ENCODE measurements at regions of chr11 and their contacts with region 1.

Region 1: DNA sequence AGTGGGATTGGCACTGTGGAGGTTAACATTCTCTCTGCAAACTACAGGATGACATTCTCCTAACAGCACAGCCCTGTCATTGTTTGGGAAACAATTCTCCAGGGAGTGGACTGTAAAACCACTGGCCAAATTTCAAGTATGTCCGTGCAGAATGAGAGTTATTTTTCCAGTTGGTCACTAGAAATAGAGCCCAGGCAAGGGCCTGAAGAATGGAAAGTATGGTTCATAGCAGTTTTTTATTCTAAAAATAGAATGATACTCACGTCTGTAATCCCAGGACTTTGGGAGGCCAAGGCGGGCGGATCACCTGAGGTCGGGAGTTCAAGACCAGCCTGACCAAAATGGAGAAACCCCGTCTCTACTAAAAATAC is 39.0 kb upstream of the CD44 start:
- DNase-seq: peak in 1 of 2 donors; percentile 80
- H3K4me3 ChIP-seq: no peak overlapping the region
- H3K27ac ChIP-seq: peak overlapping the region; percentile 75 to 83
- H3K4me1 ChIP-seq: peaks cover 0 to 27% of the 10 kb centered on the region in 2 donors
- H3K27me3 ChIP-seq: no peaks in the 10 kb centered on the region
- CTCF ChIP-seq: no peak

Region 2: GRCh38 chr11:34840736-34841386 is 259.1 kb before region 1 on chr11:
- intact Hi-C with region 1: no loop called
- DNase-seq: no peak
- H3K4me3 ChIP-seq: no peak overlapping the region
- H3K27ac ChIP-seq: no peak overlapping the region
- H3K4me1 ChIP-seq: no peaks in the 10 kb centered on the region
- H3K27me3 ChIP-seq: no peaks in the 10 kb centered on the region
- CTCF ChIP-seq: peak in 1 of 3 experiments; percentile 33

Region 3: DNA sequence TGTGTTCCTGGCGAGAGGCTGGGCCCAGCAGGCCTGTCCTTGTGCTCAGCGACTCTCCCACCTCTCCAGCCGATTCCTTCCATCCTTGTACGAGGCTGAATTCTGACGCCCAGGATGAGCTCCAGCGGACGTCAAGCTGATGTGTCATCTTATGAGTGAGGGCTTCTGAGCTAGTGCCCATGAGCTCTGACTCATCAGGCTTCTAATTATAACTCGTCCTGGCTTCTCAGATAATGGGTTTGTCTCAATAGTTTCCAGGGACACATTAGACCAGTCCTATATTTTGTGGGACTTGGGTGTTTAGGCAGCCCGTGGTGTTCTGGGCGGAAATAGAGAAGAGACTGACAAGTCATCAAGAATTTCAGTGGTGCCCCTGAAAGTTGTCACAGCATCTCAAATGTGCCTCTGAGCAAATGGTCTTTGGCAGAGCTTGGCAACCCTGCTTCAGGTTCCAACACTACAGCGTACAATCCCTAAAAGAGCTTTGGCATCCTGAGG is 69.2 kb before region 1 on chr11:
- intact Hi-C with region 1: loop called (anchors 5 kb)
- DNase-seq: peak; percentile 60 to 85
- H3K4me3 ChIP-seq: no peak overlapping the region
- H3K27ac ChIP-seq: peak overlapping the region in 1 of 2 donors; percentile 19
- H3K4me1 ChIP-seq: peaks cover 0 to 4% of the 10 kb centered on the region in 2 donors
- H3K27me3 ChIP-seq: no peaks in the 10 kb centered on the region
- CTCF ChIP-seq: no peak

Region 4: GRCh38 chr11:35082321-35083182 is 17.4 kb before region 1 on chr11:
- intact Hi-C with region 1: loop called (anchors 2 kb)
- DNase-seq: peak; percentile 37 to 81
- H3K4me3 ChIP-seq: no peak overlapping the region
- H3K27ac ChIP-seq: peak overlapping the region; percentile 67 to 69
- H3K4me1 ChIP-seq: peaks cover 13 to 42% of the 10 kb centered on the region in 2 donors
- H3K27me3 ChIP-seq: no peaks in the 10 kb centered on the region
- CTCF ChIP-seq: no peak

Region 5: GRCh38 chr11:35138943-35139721 is 39.1 kb after region 1 on chr11 and contains the start of gene CD44:
- intact Hi-C with region 1: loop called (anchors 2 kb)
- DNase-seq: peak; percentile 74 to 93
- H3K4me3 ChIP-seq: peak within 1 kb of the TSS; percentile 70 to 83
- H3K27ac ChIP-seq: peak within 1 kb of the TSS; percentile 90 to 98
- H3K4me1 ChIP-seq: peaks cover 11 to 27% of the 10 kb centered on the region in 2 donors
- H3K27me3 ChIP-seq: no peaks in the 10 kb centered on the region
- CTCF ChIP-seq: peak in 1 of 3 experiments; percentile 9
- total RNA-seq, gene CD44: 188 TPM

Region 6: DNA sequence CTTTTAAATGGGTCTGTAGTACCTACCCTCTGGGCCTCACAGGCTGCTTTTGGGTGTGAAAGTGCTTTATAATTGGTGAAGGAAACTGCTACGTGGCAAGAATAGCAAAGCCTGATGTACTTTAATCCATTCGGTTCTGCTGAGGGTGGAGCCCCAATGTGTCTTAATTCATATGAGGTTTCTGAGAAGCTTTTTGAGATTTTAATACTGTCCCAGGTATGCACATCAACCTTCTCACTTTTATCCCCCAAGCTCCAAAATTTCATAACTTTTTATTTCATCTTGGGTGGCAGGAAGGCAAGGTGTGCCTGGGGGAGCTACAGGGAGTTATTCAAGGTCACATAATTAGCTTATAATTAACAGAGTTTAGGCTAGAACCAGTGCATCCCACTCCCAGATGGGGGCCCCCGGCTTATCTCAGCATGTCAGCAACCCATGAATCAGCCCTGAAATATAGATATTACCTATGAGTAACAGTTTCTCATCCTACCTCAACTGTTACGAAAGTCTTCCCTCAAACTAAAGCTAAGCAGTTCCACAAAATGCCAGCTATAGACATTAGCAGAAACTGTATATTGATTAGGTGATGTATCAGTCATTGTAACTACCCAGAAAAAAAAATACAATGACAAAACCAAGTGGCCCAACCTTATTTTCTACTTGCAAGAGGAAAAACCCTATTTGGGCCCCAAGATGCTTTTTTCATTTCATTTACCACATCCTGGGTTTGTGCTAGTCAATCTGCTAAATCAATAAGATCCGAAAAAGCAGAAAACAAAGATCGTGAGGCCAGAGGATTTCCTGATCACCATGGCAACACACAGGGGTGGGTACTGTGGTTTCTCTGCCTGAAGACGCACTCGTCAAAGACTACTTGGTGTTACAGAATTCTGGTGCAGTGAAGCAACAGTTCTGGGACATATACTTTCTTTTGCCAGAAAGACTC is 65.7 kb after region 1 on chr11:
- intact Hi-C with region 1: loop called (anchors 2 kb)
- DNase-seq: peak in 1 of 2 donors; percentile 84
- H3K4me3 ChIP-seq: no peak overlapping the region
- H3K27ac ChIP-seq: peak overlapping the region; percentile 87 to 89
- H3K4me1 ChIP-seq: peaks cover 23 to 87% of the 10 kb centered on the region in 2 donors
- H3K27me3 ChIP-seq: no peaks in the 10 kb centered on the region
- CTCF ChIP-seq: no peak

Region 7: DNA sequence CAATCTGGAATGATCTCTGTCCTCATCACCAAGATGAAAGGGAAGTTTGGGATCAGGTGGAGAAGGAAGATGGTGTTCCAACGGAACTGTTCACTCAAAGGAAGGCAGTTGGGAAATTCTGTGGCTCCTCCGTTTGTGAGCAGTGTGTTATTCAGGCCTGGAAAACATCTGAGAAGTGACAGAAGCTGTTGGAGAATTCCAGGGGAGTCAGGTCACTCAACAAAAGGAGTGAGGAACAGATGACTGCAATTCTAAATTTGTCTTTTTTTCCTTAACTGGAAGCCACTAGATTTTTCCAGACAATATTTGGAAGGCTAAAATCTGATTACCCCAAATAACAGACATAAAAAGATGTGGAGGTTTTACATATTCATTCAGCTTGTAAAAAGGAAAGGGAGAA is 146.7 kb after region 1 on chr11:
- intact Hi-C with region 1: loop called (anchors 2 kb)
- DNase-seq: peak in 1 of 2 donors; percentile 88
- H3K4me3 ChIP-seq: no peak overlapping the region
- H3K27ac ChIP-seq: peak overlapping the region; percentile 91 to 95
- H3K4me1 ChIP-seq: peaks cover 9 to 22% of the 10 kb centered on the region in 2 donors
- H3K27me3 ChIP-seq: no peaks in the 10 kb centered on the region
- CTCF ChIP-seq: no peak

Region 8: DNA sequence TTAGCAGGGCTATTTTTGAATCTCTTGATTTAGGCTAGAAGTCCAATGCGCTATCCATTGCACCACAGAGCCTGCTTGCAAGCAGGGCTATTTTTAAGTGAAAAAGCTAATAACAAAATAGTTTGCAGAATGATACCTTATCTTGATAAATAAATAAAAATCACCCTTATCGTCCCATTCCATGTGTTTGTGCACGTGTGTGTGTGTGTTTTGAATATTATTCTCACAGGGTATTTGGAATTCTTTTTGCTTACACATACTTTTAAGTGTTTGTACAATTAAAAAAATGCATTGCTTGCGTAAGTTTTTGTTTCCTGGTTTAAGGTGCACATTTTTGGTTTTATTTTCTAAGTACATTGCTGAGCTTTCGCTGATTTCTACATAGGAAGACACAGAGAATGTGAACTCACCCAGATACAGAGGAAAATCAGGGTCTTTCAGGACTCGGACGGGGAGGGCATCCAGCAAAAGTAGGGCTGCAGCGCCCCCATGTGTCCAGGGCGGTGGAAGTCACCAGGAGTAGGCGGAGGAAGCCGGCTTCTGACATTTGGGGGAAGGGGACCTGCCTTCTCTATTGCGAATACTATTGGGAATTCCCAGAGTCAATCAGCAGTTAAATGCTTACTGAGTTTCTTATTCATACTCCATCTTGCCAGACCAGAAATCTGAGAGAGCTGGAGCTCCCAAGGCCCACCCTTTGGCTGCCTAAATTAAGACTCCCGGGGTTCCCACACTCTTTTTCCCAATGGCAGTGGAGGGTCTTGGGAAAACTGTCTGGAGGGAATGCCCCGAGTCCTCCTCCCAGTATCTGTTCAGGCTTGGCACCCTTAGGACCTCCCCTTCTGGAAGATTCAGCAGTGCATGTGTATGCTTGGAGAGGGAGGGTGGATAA is 292.2 kb after region 1 on chr11:
- intact Hi-C with region 1: loop called (anchors 5 kb)
- DNase-seq: peak in 1 of 2 donors; percentile 87
- H3K4me3 ChIP-seq: peak overlapping the region; percentile 39 to 44
- H3K27ac ChIP-seq: peak overlapping the region; percentile 66 to 74
- H3K4me1 ChIP-seq: peaks cover 4 to 27% of the 10 kb centered on the region in 2 donors
- H3K27me3 ChIP-seq: no peaks in the 10 kb centered on the region
- CTCF ChIP-seq: peak; percentile 91 to 95 (median 94)

Measured in ascending aorta (tissue), 2 donors.